ENCODE measurements at regions of chr3 and their contacts with region 1.

Region 1: DNA sequence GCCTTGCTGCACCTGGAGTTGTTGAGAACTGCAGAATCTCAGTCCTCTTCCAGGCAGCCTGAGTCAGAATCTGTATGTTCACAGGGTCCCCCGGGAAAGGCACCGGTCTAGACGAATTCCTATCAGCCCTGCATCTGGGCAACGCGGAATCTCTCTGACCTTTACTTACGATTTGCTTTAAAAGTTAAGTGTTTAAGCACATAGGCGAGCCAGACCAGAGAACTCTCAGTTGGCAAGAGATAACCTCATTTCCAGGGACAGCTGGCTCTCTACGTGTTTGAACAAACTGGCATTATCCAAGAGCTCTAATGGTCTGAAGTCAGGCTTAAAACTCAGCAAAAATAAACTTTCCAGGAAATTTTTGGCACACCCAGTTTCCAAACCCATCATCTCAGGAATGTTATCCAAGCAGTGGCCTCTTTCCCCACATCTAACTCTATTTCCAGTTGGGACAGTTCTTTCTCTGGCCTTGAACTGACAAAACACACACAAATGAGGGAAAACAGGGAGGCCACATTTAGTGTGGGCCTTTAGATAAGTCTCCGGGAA is 53.4 kb downstream of the HES1 start:
- DNase-seq: peak; percentile 66
- H3K4me3 ChIP-seq: no peak overlapping the region
- H3K27ac ChIP-seq: no peak overlapping the region
- H3K4me1 ChIP-seq: peaks cover 8% of the 10 kb centered on the region
- H3K27me3 ChIP-seq: no peaks in the 10 kb centered on the region
- CTCF ChIP-seq: no peak
- POLR2A ChIP-seq: no peak

Region 2: DNA sequence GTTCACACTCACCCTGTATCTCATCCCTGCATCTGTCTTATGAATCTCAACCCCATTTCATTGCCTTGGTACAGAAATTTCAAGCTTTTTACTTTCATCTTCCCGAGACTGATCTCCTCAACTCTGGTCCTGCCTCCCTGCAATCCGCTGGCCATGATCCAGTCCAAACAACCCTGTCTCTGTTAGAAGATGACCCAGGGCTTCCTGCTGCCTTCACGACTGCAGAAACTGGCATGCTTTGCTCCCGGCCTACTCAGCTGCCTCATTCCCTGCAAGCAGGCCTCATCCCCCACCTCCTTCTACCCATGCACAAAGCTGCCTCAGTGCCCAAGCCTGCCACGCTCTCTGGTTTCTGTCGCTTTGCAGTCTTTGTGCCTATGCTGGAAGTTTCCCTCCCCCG is 40.9 kb before region 1 on chr3:
- CTCF ChIA-PET with region 1: no interaction called
- POLR2A ChIA-PET with region 1: no interaction called
- dilution Hi-C with region 1: no loop called
- intact Hi-C with region 1: no loop called
- DNase-seq: peak; percentile 79
- H3K4me3 ChIP-seq: no peak overlapping the region
- H3K27ac ChIP-seq: no peak overlapping the region
- H3K4me1 ChIP-seq: peaks cover 8% of the 10 kb centered on the region
- H3K27me3 ChIP-seq: no peaks in the 10 kb centered on the region
- CTCF ChIP-seq: no peak
- POLR2A ChIP-seq: no peak

Region 3: GRCh38 chr3:194255252-194256039 is 66.1 kb after region 1 on chr3:
- CTCF ChIA-PET with region 1: no interaction called
- POLR2A ChIA-PET with region 1: interaction called, 3 read pairs
- dilution Hi-C with region 1: no loop called
- intact Hi-C with region 1: loop called (anchors 1 kb)
- DNase-seq: peak; percentile 94
- H3K4me3 ChIP-seq: no peak overlapping the region
- H3K27ac ChIP-seq: peak overlapping the region; percentile 85
- H3K4me1 ChIP-seq: peaks cover 14% of the 10 kb centered on the region
- H3K27me3 ChIP-seq: no peaks in the 10 kb centered on the region
- CTCF ChIP-seq: peak in 1 of 2 donors; percentile 6
- POLR2A ChIP-seq: no peak